Activated naive CD4-positive, alpha-beta T cell treated with anti-CD3 and anti-CD28 coated beads, Interleukin-2, amount 10 ng/mL, durations not matched to agents 7 days and 5 days (primary cell): ENCODE measurements at regions of chr1 and their contacts with region 1.

Region 1: GRCh38 chr1:16078925-16079656 is 5.6 kb upstream of the FAM131C start:
- DNase-seq: peak; percentile 85
- H3K4me3 Mint-ChIP-seq: peak overlapping the region; percentile 50
- H3K27ac Mint-ChIP-seq: peak overlapping the region; percentile 65
- H3K4me1 Mint-ChIP-seq: peaks cover 13% of the 10 kb centered on the region
- H3K27me3 Mint-ChIP-seq: peaks cover 37% of the 10 kb centered on the region

Region 2: DNA sequence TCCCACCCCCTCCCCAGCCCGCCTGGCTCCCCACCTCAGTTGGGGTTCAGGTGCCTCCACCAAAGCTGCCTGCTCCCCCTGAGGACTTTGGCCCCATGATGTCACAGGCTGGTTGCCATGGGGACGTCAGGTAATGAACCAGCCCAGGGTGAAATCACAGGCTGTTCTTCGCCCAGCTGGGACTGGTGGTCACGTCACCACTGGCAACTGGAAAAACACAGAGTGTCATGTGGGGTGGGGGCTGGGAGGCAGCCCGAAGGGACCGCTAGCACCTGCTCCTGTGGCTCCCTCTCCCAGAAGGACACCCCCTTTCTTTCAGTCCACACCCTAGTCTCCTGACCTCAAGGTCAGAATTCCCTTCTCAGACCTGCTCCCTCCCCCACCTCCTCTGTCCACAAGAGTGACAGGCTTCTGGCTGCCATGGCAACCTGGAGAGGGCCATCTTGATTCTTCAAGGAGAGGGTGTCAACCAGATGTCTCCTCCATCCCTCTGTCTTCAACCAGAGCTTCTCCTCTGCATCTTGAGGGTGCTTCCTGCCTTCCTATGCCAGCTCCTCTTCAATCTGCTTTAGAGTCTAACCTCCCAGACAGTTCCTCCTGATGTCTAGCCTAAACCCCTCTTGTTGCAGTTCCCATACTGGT is 11.8 kb before region 1 on chr1:
- CTCF ChIA-PET with region 1: interaction called, 42 read pairs
- DNase-seq: peak; percentile 36
- H3K4me3 Mint-ChIP-seq: no peak overlapping the region
- H3K27ac Mint-ChIP-seq: no peak overlapping the region
- H3K4me1 Mint-ChIP-seq: peaks cover 63% of the 10 kb centered on the region
- H3K27me3 Mint-ChIP-seq: peaks cover 74% of the 10 kb centered on the region

Region 3: DNA sequence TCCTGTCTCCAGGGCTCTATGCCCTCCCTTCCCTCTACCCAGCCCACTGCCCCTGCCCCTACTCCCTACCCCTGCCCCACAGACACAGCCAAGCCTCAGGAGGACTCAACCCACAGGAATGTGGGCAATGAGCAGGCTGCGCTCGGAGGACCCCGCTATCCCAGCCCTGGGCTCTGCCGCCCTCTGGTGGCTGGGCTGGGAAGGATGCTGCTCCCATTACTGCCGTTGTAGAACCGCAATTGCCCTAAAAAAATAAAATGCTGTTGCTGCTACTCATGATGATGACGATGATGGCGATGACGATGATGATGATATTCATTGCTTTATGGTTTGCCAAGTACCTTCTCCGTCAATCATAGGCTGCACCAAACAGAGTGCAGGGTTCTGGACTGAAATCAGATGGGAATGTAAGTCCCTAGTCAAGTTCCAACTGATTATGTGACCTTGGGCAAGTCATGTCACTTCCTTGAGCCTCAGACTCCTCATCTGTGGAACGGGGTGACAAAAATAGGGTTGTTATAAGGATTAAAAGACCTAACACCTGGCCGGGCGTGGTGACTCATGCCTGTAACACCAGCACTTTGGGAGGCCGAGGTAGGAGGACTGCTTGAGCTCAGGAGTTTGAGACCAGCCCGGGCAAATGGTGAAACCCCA is 108.8 kb after region 1 on chr1:
- CTCF ChIA-PET with region 1: interaction called, 275 read pairs
- DNase-seq: peak; percentile 83
- H3K4me3 Mint-ChIP-seq: no peak overlapping the region
- H3K27ac Mint-ChIP-seq: no peak overlapping the region
- H3K4me1 Mint-ChIP-seq: no peaks in the 10 kb centered on the region
- H3K27me3 Mint-ChIP-seq: peaks cover 24% of the 10 kb centered on the region

Region 4: GRCh38 chr1:16217061-16217785 is 138.1 kb after region 1 on chr1:
- CTCF ChIA-PET with region 1: interaction called, 10 read pairs
- DNase-seq: peak; percentile 97
- H3K4me3 Mint-ChIP-seq: peak overlapping the region; percentile 64
- H3K27ac Mint-ChIP-seq: peak overlapping the region; percentile 13
- H3K4me1 Mint-ChIP-seq: peaks cover 37% of the 10 kb centered on the region
- H3K27me3 Mint-ChIP-seq: peaks cover 40% of the 10 kb centered on the region

Region 5: DNA sequence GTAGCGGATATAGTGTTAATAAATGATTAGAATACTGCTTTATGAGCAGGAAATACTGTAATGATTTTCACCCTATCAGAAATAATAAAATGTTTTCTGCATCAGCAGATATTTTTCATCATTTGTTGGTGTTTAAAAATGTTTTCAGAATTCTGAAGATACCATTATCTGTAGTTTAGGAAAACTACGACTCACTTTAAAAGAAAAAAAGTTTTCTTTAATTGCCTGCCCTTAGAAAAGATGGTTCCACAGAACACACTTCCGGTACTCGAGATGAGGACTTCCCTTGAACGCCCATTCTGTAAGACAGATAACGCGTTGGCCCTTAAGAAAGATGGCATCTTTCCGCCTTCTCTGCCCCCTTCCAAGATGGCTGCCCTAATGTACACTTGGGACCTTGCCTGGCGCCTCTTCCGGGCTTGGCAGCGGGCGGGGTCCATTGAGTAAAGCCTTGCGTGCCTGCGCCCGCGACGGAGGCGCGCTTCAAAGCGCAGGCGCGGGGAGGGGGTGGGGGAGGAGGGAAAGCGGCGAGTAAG is 287.7 kb after region 1 on chr1 and contains the start of gene SZRD1:
- CTCF ChIA-PET with region 1: interaction called, 27 read pairs
- DNase-seq: peak; percentile 97
- H3K4me3 Mint-ChIP-seq: peak within 1 kb of the TSS; percentile 95
- H3K27ac Mint-ChIP-seq: peak within 1 kb of the TSS; percentile 99
- H3K4me1 Mint-ChIP-seq: peaks cover 44% of the 10 kb centered on the region
- H3K27me3 Mint-ChIP-seq: no peaks in the 10 kb centered on the region